Endothelial cell of umbilical vein (primary cell): ENCODE measurements at regions of chr20 and their contacts with region 1.

Region 1: GRCh38 chr20:15930311-15931305 is 642.6 kb downstream of the KIF16B start:
- DNase-seq: peak; percentile 54
- H3K4me3 ChIP-seq: peak overlapping the region in 1 of 3 experiments; percentile 28
- H3K27ac ChIP-seq: no peak overlapping the region
- H3K4me1 ChIP-seq: no peaks in the 10 kb centered on the region
- H3K27me3 ChIP-seq: no peaks in the 10 kb centered on the region
- CTCF ChIP-seq: peak; percentile 17 to 50
- POLR2A ChIP-seq: no peak

Region 2: GRCh38 chr20:15236812-15237211 is 693.8 kb before region 1 on chr20:
- CTCF ChIA-PET with region 1: no interaction called
- POLR2A ChIA-PET with region 1: no interaction called
- dilution Hi-C with region 1: no loop called
- intact Hi-C with region 1: loop called (anchors 5 kb)
- DNase-seq: peak; percentile 69
- H3K4me3 ChIP-seq: no peak overlapping the region
- H3K27ac ChIP-seq: no peak overlapping the region
- H3K4me1 ChIP-seq: no peaks in the 10 kb centered on the region
- H3K27me3 ChIP-seq: no peaks in the 10 kb centered on the region
- CTCF ChIP-seq: peak; percentile 70 to 71
- POLR2A ChIP-seq: no peak

Region 3: DNA sequence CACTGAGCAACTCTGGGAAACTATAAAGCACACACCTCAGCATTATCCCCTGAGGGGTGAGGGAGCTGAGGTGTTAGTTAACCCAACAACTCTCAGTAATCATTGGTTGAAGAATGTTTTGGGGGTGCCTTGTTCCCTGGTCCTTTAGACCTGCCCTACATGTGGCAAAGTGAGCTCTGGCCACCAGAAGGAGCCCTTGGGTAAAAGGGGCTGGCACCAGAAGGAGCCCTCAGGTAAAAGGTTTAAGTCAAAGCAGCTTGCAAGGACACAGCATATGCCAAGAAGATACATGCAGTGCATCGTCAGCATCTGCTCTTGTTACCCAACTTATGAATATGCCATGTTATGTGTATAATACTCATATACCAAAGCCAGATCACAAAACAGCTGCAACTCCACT is 439.0 kb before region 1 on chr20:
- CTCF ChIA-PET with region 1: interaction called, 4 read pairs
- POLR2A ChIA-PET with region 1: no interaction called
- dilution Hi-C with region 1: no loop called
- intact Hi-C with region 1: loop called (anchors 1 kb)
- DNase-seq: peak; percentile 7
- H3K4me3 ChIP-seq: no peak overlapping the region
- H3K27ac ChIP-seq: no peak overlapping the region
- H3K4me1 ChIP-seq: no peaks in the 10 kb centered on the region
- H3K27me3 ChIP-seq: no peaks in the 10 kb centered on the region
- CTCF ChIP-seq: peak in 1 of 2 donors; percentile 17
- POLR2A ChIP-seq: no peak

Region 4: DNA sequence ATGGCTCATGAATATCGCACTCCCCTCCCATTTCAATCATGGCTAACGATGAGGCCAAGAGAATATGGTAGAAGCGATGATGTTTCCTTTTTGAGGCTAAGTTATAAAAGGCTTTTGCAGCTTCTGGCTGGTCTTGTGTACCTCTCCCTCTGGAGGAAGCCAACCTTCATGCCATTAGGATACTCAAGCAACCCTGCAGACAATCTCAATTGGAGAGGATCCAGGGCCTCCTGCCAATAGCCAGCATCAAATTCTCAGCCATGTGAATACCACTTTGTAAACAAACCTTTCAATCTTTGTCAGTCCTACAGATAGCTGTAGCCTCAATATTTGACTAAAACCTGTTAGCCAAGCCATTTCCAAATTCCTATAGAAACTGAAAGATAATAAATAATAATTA is 95.8 kb before region 1 on chr20:
- CTCF ChIA-PET with region 1: no interaction called
- POLR2A ChIA-PET with region 1: no interaction called
- dilution Hi-C with region 1: no loop called
- intact Hi-C with region 1: no loop called
- DNase-seq: no peak
- H3K4me3 ChIP-seq: no peak overlapping the region
- H3K27ac ChIP-seq: no peak overlapping the region
- H3K4me1 ChIP-seq: no peaks in the 10 kb centered on the region
- H3K27me3 ChIP-seq: no peaks in the 10 kb centered on the region
- CTCF ChIP-seq: no peak
- POLR2A ChIP-seq: no peak

Region 5: GRCh38 chr20:16476032-16476431 is 545.4 kb after region 1 on chr20:
- CTCF ChIA-PET with region 1: no interaction called
- POLR2A ChIA-PET with region 1: no interaction called
- dilution Hi-C with region 1: no loop called
- intact Hi-C with region 1: loop called (anchors 5 kb)
- DNase-seq: peak; percentile 65
- H3K4me3 ChIP-seq: no peak overlapping the region
- H3K27ac ChIP-seq: no peak overlapping the region
- H3K4me1 ChIP-seq: no peaks in the 10 kb centered on the region
- H3K27me3 ChIP-seq: no peaks in the 10 kb centered on the region
- CTCF ChIP-seq: peak; percentile 50 to 57
- POLR2A ChIP-seq: no peak

Region 6: GRCh38 chr20:16761305-16761829 is 830.8 kb after region 1 on chr20:
- CTCF ChIA-PET with region 1: no interaction called
- POLR2A ChIA-PET with region 1: no interaction called
- dilution Hi-C with region 1: no loop called
- intact Hi-C with region 1: loop called (anchors 2 kb)
- DNase-seq: peak; percentile 65
- H3K4me3 ChIP-seq: no peak overlapping the region
- H3K27ac ChIP-seq: no peak overlapping the region
- H3K4me1 ChIP-seq: no peaks in the 10 kb centered on the region
- H3K27me3 ChIP-seq: no peaks in the 10 kb centered on the region
- CTCF ChIP-seq: peak; percentile 60 to 64
- POLR2A ChIP-seq: no peak